Vagina (tissue), 2 donors: ENCODE measurements at regions of chr19 and their contacts with region 1.

Region 1: GRCh38 chr19:18589380-18590272 is 1.0 kb downstream of the REX1BD start:
- DNase-seq: no peak
- H3K4me3 ChIP-seq: peak overlapping the region; percentile 72 to 79
- H3K27ac ChIP-seq: peak overlapping the region; percentile 88
- H3K4me1 ChIP-seq: peaks cover 44% of the 10 kb centered on the region
- H3K27me3 ChIP-seq: no peaks in the 10 kb centered on the region
- CTCF ChIP-seq: no peak
- POLR2A ChIP-seq: no peak

Region 2: DNA sequence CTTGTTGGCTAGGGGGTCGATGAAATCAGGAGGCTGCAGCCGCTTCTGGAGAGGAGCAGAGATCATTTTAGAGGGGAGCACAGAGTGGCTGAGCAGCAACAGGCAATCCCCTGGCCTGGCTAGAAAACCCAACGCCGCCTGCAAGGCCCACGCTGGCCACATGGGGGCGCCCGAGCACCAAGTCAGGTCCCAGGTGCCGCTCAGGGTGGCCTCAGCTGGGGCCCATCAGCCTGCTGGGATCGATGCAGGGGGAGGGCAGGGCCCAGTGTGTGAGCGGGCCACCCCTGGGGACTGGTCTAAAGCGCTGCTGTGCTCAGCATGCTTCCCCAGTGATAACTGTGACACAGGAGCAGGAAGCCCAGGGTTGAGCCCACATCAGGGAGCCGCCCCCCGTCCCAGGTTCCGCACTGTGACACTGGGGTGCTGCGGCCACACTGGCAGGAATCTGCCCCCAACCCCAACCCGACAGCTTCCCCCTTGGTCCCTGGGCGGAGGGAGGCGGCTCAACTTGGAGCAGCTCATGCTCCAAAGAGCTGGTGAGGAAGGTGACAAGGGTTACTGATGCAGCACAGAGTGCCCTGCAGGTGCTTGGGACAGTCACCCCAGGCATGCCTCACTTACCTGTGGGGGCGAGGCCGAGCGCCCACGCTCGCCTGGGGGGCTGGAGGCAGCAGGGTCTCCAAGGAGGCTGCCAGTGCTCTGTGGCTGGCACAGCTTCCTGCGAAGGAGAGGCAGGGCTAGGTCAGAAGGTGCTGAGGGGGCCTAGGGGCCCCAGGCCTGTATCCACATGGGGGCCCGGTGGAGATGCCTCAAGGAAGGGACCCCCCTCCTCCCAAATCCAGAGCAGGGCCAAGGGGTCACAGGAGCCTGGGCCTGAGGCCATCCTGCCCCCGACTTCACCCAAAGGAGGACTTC is 138.4 kb before region 1 on chr19:
- intact Hi-C with region 1: loop called (anchors 5 kb)
- DNase-seq: no peak
- H3K4me3 ChIP-seq: no peak overlapping the region
- H3K27ac ChIP-seq: peak overlapping the region; percentile 22
- H3K4me1 ChIP-seq: peaks cover 10% of the 10 kb centered on the region
- H3K27me3 ChIP-seq: no peaks in the 10 kb centered on the region
- CTCF ChIP-seq: peak; percentile 79 to 98 (median 95)
- POLR2A ChIP-seq: no peak

Region 3: DNA sequence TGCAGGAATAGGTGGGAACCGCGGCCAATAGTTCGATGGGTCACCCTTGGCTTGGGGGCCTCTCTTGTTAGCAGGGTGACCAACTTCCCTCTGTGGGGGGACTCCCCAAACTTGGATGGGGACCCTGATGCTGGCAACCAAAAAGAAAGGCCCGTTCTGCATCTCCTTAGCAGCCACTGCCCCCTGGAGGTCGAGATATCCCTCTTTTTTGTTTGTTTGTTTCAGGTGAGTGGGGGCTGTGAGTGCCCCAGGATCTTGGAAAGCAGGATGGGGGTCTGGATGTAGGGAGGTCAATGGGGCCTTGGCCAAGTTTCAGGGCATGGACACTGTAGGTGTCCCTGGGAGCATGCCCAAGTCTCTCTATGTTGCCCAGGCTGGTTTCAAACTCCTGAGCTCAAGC is 86.2 kb after region 1 on chr19:
- intact Hi-C with region 1: loop called (anchors 10 kb)
- DNase-seq: no peak
- H3K4me3 ChIP-seq: no peak overlapping the region
- H3K27ac ChIP-seq: no peak overlapping the region
- H3K4me1 ChIP-seq: peaks cover 23% of the 10 kb centered on the region
- H3K27me3 ChIP-seq: no peaks in the 10 kb centered on the region
- CTCF ChIP-seq: no peak
- POLR2A ChIP-seq: no peak

Region 4: DNA sequence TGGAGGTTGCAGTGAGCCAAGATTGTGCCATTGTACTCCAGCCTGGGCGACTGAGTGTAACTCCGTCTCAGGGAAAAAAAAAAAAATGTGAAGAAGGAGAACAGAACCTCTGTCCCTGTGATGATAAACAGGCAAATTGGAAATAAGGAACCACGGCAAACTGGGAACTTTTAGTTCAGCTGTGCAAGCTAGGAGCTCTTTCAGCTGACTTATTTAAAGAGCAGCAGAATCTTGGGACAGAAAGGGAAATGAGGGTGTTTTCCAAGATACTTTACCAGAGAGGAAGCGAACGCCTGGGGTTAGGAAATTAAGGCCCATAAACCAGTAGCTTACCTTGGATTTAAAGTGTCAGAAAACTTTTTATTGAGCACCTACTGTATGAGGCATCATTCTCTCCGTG is 239.2 kb after region 1 on chr19:
- intact Hi-C with region 1: no loop called
- DNase-seq: no peak
- H3K4me3 ChIP-seq: no peak overlapping the region
- H3K27ac ChIP-seq: no peak overlapping the region
- H3K4me1 ChIP-seq: peaks cover 14% of the 10 kb centered on the region
- H3K27me3 ChIP-seq: no peaks in the 10 kb centered on the region
- CTCF ChIP-seq: no peak
- POLR2A ChIP-seq: no peak

Region 5: GRCh38 chr19:18853755-18854427 is 264.3 kb after region 1 on chr19:
- intact Hi-C with region 1: loop called (anchors 5 kb)
- DNase-seq: no peak
- H3K4me3 ChIP-seq: no peak overlapping the region
- H3K27ac ChIP-seq: no peak overlapping the region
- H3K4me1 ChIP-seq: peaks cover 30% of the 10 kb centered on the region
- H3K27me3 ChIP-seq: no peaks in the 10 kb centered on the region
- CTCF ChIP-seq: no peak
- POLR2A ChIP-seq: no peak